Left ventricle myocardium superior (tissue), 1 donor: ENCODE measurements at regions of chr14 and their contacts with region 1.

Region 1: DNA sequence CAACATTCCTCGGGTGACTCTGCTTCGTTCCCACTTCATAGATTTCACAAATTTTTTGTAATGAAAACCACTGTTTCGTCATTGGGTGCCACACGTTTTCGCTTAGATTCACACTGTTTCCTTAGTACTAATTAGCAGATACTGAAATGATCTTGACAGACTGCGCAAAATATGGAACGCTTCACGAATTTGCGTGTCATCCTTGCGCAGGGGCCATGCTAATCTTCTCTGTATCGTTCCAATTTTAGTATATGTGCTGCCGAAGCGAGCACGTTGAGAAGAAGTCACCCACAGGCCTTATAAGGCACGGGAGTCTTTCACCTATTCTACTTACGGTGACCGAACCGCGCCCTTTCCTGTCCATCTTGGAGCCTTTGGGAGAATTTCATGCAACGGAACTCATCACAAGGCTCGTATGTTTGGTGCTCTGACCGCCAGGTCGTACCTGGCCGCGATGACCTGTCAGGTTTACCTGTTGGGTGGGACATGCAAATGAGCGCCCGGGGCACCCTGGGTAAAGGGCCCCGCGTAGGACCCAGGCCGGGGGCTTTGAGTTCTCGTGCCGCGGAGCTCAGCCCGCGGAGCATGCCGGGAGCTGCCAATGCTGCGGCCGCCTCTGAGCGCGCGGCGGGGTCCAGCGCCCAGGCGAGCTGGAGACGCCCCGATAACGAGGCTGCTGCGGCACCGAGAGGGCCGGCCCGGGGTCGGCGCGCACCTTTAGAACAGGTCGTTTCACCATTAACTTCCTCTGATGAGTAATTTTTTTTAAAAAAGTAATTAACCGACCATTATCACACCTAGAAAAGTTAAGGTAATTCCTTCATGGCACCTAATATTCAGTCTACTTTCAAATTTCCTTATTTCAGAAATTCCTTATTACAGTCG is at the start of gene RNU6-8:
- DNase-seq: peak; percentile 93
- ATAC-seq: peak; percentile 92
- total RNA-seq, gene RNU6-8: not detected

Region 2: GRCh38 chr14:32087173-32087861 is 115.9 kb before region 1 on chr14:
- intact Hi-C with region 1: loop called (anchors 10 kb)
- DNase-seq: no peak
- ATAC-seq: no peak